Heart right ventricle (tissue), 16 donors: ENCODE measurements at regions of chr3 and their contacts with region 1.

Region 1: GRCh38 chr3:20511863-20512505 is 326.0 kb upstream of the SGO1 start:
- DNase-seq: peak in 1 of 2 donors; percentile 10
- ATAC-seq: peak; percentile 64 to 90 (median 86)
- H3K4me3 ChIP-seq: no peak overlapping the region
- H3K27ac ChIP-seq: no peak overlapping the region
- H3K4me1 ChIP-seq: peaks cover 0 to 5% (median 0%) of the 10 kb centered on the region in 9 donors
- H3K27me3 ChIP-seq: no peaks in the 10 kb centered on the region
- CTCF ChIP-seq: peak; percentile 30 to 82 (median 70)

Region 2: DNA sequence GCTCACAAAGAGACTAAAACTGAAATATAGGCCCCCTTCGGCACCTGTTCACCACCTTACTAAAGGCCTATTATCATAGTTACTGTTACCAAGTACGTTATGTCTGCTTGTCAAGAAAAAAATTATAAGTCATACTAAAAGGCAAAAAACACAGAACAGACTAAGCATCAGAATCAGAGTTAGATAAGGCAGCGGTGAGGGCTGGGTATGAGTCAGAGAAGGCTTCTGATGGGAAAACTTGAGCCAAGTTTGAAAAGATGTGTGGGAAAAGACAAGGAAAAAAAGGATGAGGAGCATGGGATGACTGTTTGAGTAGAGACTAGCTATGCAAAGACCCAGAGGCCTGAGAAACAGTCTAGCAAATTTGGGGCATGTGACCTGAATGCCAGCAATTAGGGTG is 61.2 kb after region 1 on chr3:
- intact Hi-C with region 1: no loop called
- DNase-seq: no peak
- ATAC-seq: no peak
- H3K4me3 ChIP-seq: no peak overlapping the region
- H3K27ac ChIP-seq: no peak overlapping the region
- H3K4me1 ChIP-seq: peaks cover 0 to 18% (median 5%) of the 10 kb centered on the region in 9 donors
- H3K27me3 ChIP-seq: no peaks in the 10 kb centered on the region
- CTCF ChIP-seq: no peak

Region 3: GRCh38 chr3:20739814-20740213 is 227.8 kb after region 1 on chr3:
- intact Hi-C with region 1: loop called in 9 of 10 experiments (anchors 2 to 10 kb)
- DNase-seq: no peak
- ATAC-seq: peak in 1 of 8 donors; percentile 69
- H3K4me3 ChIP-seq: no peak overlapping the region
- H3K27ac ChIP-seq: no peak overlapping the region
- H3K4me1 ChIP-seq: peaks cover 0 to 4% (median 0%) of the 10 kb centered on the region in 9 donors
- H3K27me3 ChIP-seq: no peaks in the 10 kb centered on the region
- CTCF ChIP-seq: peak in 6 of 9 donors; percentile 14 to 52 (median 32)

Region 4: DNA sequence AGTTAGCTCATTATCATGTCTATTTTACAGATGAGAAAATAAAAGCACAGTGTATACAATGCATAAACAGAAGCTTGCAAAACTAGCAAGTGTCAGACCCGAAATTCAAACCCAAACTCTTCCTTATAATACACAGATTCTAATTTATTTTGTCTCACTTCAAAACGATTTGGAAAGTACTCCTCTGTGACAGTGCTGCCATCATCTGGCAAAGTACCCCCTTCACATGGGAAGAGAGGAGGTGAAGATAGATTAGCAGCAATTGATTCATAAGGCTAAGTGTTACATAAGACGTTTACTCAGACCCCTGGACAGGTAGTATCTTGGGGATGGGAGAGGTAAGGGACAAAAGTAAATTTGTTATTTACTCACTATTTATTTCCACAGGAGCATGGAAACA is 418.1 kb after region 1 on chr3:
- intact Hi-C with region 1: loop called in 1 of 10 experiments (anchors 10 kb)
- DNase-seq: no peak
- ATAC-seq: no peak
- H3K4me3 ChIP-seq: no peak overlapping the region
- H3K27ac ChIP-seq: no peak overlapping the region
- H3K4me1 ChIP-seq: no peaks in the 10 kb centered on the region
- H3K27me3 ChIP-seq: no peaks in the 10 kb centered on the region
- CTCF ChIP-seq: peak in 8 of 9 donors; percentile 8 to 52 (median 34)

Region 5: DNA sequence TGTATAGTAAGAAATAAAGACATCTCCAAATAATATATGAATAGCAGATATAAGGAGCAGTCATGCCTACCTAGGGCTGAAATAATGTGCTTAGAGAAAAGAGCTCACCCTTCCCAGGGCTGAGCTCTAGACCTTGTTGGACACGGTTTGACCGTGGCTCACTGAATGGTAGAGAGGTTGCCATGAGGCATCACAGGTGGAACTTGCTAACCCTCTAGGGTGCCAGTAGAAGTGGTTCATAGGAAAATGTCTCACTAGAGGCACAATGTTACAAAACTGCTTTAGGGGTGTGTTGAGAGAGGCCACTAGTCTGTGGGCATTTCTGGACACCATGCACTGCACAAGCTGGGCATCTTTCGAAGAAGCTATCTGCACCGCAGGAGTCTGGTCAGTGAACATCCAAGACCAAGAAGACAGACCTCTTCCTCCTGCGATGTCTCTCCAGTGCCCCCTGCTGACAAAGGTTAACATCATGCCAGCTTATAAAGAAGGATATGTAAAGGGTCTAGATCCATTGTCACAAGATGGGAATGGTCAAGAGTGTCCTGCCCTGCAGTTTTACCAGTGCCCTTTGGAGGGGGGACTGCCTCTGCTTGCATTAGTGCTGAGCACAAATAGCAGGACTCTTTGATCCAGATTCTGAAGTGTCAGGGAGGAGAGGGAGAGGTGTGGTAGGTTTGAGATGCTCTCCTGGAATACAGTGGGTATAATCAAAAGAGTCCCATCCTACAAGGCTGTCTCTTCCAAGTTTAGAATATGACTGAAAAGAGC is 972.3 kb after region 1 on chr3:
- intact Hi-C with region 1: loop called in 6 of 10 experiments (anchors 5 to 10 kb)
- DNase-seq: peak; percentile 11 to 64
- ATAC-seq: peak in 7 of 8 donors; percentile 46 to 80 (median 67)
- H3K4me3 ChIP-seq: no peak overlapping the region
- H3K27ac ChIP-seq: no peak overlapping the region
- H3K4me1 ChIP-seq: peaks cover 0 to 1% (median 0%) of the 10 kb centered on the region in 9 donors
- H3K27me3 ChIP-seq: no peaks in the 10 kb centered on the region
- CTCF ChIP-seq: peak; percentile 36 to 74 (median 63)

Region 6: GRCh38 chr3:21752749-21753347 is 1240.9 kb after region 1 on chr3:
- intact Hi-C with region 1: loop called in 1 of 10 experiments (anchors 5 kb)
- DNase-seq: peak in 1 of 2 donors; percentile 54
- ATAC-seq: peak in 7 of 8 donors; percentile 48 to 78 (median 69)
- H3K4me3 ChIP-seq: no peak overlapping the region
- H3K27ac ChIP-seq: peak overlapping the region in 3 of 10 donors; percentile 4 to 80 (median 36)
- H3K4me1 ChIP-seq: peaks cover 0 to 47% (median 11%) of the 10 kb centered on the region in 9 donors
- H3K27me3 ChIP-seq: no peaks in the 10 kb centered on the region
- CTCF ChIP-seq: peak; percentile 58 to 89 (median 77)

Region 7: GRCh38 chr3:21894459-21895340 is 1382.7 kb after region 1 on chr3:
- intact Hi-C with region 1: loop called in 3 of 10 experiments (anchors 5 to 10 kb)
- DNase-seq: peak in 1 of 2 donors; percentile 19
- ATAC-seq: peak in 7 of 8 donors; percentile 50 to 82 (median 71)
- H3K4me3 ChIP-seq: no peak overlapping the region
- H3K27ac ChIP-seq: peak overlapping the region in 4 of 10 donors; percentile 5 to 44 (median 33)
- H3K4me1 ChIP-seq: peaks cover 0 to 51% (median 0%) of the 10 kb centered on the region in 9 donors
- H3K27me3 ChIP-seq: no peaks in the 10 kb centered on the region
- CTCF ChIP-seq: peak; percentile 41 to 84 (median 70)

Region 8: GRCh38 chr3:22117751-22118346 is 1605.9 kb after region 1 on chr3:
- intact Hi-C with region 1: loop called in 2 of 10 experiments (anchors 2 to 10 kb)
- DNase-seq: no peak
- ATAC-seq: no peak
- H3K4me3 ChIP-seq: no peak overlapping the region
- H3K27ac ChIP-seq: no peak overlapping the region
- H3K4me1 ChIP-seq: no peaks in the 10 kb centered on the region
- H3K27me3 ChIP-seq: no peaks in the 10 kb centered on the region
- CTCF ChIP-seq: peak; percentile 34 to 80 (median 66)